Calu3 (cell line): ENCODE measurements at regions of chr22 and their contacts with region 1.

Region 1: GRCh38 chr22:16917144-16918003 is 90.6 kb downstream of the GAB4 start:
- DNase-seq: peak; percentile 68
- H3K4me3 Mint-ChIP-seq: no peak overlapping the region
- H3K27ac Mint-ChIP-seq: no peak overlapping the region
- H3K4me1 Mint-ChIP-seq: no peaks in the 10 kb centered on the region
- H3K27me3 Mint-ChIP-seq: no peaks in the 10 kb centered on the region
- CTCF ChIP-seq: peak; percentile 57

Region 2: DNA sequence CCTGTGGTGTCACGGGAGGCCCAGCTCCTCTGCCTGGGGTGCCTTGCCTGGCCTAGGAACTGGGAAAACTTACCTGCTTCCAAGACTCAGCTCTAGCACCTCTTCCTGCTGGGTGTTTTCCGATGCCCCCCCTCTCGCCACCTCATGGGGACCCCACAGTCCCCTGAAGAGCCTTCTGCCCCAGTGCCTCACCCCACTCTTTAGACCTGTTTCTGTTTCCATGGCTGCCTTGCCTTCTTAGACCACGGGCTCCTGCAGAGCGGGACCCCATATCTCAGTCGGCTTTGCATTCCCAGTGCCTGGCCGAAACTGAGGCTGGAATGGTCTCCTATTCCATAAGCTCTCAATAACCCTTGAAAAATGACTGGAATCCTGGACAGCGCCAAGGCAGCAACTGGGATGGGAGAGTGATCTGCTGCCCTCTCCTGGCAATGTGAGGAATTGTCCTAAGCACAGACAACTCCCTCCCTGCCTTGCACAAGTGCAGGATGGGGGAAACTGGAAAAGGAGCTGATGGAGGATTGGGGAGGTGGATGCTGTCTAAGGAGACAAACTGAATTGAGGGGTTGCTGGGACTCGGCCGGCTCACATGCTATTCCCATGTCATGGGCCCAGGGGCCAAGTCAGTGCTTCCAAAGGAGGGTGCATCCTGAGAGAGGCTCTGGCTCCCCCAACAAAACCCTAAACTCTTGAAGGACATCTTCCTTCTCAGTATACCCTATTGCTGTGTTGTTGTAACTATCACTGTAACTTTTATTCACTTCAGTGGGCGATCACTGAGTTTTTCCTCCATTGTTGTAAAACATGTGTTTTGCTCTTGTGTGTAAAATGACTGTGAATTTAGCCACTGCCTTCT is 140.8 kb after region 1 on chr22:
- CTCF ChIA-PET with region 1: interaction called, 10 read pairs
- intact Hi-C with region 1: loop called (anchors 1 kb)
- DNase-seq: peak; percentile 71
- H3K4me3 Mint-ChIP-seq: no peak overlapping the region
- H3K27ac Mint-ChIP-seq: no peak overlapping the region
- H3K4me1 Mint-ChIP-seq: no peaks in the 10 kb centered on the region
- H3K27me3 Mint-ChIP-seq: peaks cover 83% of the 10 kb centered on the region
- CTCF ChIP-seq: peak; percentile 86